HEK293T (cell line): ENCODE measurements at regions of chr16 and their contacts with region 1.

Region 1: DNA sequence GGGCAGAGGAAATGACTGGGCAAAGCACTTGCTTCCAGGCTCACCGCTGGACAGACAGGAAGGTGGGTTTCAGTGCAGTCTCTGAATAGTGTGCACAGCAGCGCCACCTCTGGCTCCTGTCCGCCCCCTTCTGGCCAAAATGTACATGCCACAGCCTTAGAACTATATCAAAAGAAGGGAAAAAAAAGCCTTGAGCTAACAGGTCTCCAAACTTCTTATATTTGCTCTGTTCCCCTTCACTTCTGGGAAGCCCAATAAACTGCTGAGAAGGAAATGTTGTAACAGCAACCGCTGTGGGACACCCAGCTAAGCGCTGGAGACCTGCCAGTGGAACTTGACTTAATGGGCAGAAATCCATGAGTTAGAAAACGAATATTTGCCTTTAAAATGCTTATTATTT is 17.5 kb downstream of the COG7 start:
- DNase-seq: peak; percentile 74

Region 2: GRCh38 chr16:23182460-23183309 is 252.8 kb before region 1 on chr16 and contains the start of gene SCNN1G:
- CTCF ChIA-PET with region 1: interaction called, 27 read pairs
- POLR2A ChIA-PET with region 1: no interaction called
- DNase-seq: peak; percentile 84

Region 3: GRCh38 chr16:23257637-23258036 is 177.9 kb before region 1 on chr16:
- CTCF ChIA-PET with region 1: no interaction called
- POLR2A ChIA-PET with region 1: no interaction called
- DNase-seq: no peak

Region 4: GRCh38 chr16:23448392-23448791 is 12.9 kb after region 1 on chr16:
- CTCF ChIA-PET with region 1: interaction called, 10 read pairs
- POLR2A ChIA-PET with region 1: no interaction called
- DNase-seq: no peak

Region 5: DNA sequence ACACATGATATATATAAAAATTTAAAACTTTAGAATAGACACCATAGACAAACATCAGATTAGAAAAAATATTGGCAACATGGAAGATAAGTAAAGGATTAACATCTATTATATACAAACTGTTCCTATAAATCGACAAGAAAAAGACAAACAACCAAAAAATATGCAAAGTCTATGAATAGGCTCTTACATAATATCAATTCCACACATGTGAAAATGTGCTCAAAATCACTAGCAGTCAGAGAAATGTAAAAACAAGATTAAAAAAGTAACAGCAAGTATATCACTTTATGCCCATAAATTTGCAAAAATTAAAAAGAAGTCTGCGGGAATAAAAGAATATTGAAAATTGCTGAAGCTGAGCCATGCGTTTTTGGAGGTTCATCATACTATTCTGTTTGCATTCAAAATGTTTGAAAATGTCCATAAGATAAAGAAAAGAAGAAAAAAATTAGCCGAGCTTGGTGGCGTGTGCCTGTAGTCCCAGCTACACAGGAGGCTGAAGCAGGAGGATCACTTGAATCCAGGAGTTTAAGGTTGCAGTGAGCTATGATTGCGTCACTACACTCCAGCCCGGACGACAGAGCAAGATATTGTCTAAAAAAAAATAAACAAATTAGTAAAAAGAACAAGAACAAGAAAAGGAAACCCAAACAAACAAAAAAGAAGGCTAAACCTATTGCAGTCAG is 288.7 kb after region 1 on chr16:
- CTCF ChIA-PET with region 1: no interaction called
- POLR2A ChIA-PET with region 1: no interaction called
- DNase-seq: no peak